HepG2 (cell line): ENCODE measurements at regions of chr15 and their contacts with region 1.

Region 1: GRCh38 chr15:60591496-60592370 is 112.8 kb upstream of the ICE2 start:
- DNase-seq: no peak
- ATAC-seq: peak; percentile 69
- H3K4me3 ChIP-seq: peak overlapping the region; percentile 86 to 98 (median 90)
- H3K27ac ChIP-seq: peak overlapping the region; percentile 90
- H3K4me1 ChIP-seq: peaks cover 55% of the 10 kb centered on the region
- H3K27me3 ChIP-seq: peaks cover 0 to 8% of the 10 kb centered on the region in 2 experiments; a peak in 1 of 5 replicates
- CTCF ChIP-seq: no peak
- EP300 ChIP-seq: no peak
- POLR2A ChIP-seq: no peak; a peak in 2 of 4 replicates
- RAD21 ChIP-seq: no peak; the same call in 1 of the 2 replicates

Region 2: GRCh38 chr15:60568944-60569391 is 22.8 kb before region 1 on chr15:
- CTCF ChIA-PET with region 1: no interaction called
- POLR2A ChIA-PET with region 1: no interaction called
- in situ Hi-C with region 1: no loop called
- intact Hi-C with region 1: no loop called
- DNase-seq: no peak
- ATAC-seq: no peak
- H3K4me3 ChIP-seq: no peak overlapping the region
- H3K27ac ChIP-seq: no peak overlapping the region
- H3K4me1 ChIP-seq: peaks cover 76% of the 10 kb centered on the region
- H3K27me3 ChIP-seq: no peaks in the 10 kb centered on the region
- CTCF ChIP-seq: no peak
- EP300 ChIP-seq: no peak
- POLR2A ChIP-seq: no peak
- RAD21 ChIP-seq: no peak

Region 3: GRCh38 chr15:60580650-60581376 is 10.9 kb before region 1 on chr15:
- CTCF ChIA-PET with region 1: no interaction called
- POLR2A ChIA-PET with region 1: interaction called, 12 read pairs
- in situ Hi-C with region 1: no loop called
- intact Hi-C with region 1: no loop called
- DNase-seq: peak; percentile 72
- ATAC-seq: no peak
- H3K4me3 ChIP-seq: no peak overlapping the region
- H3K27ac ChIP-seq: no peak overlapping the region
- H3K4me1 ChIP-seq: peaks cover 87% of the 10 kb centered on the region
- H3K27me3 ChIP-seq: no peaks in the 10 kb centered on the region
- CTCF ChIP-seq: no peak
- EP300 ChIP-seq: peak in 1 of 2 experiments; percentile 42; a peak in 1 of 4 replicates
- POLR2A ChIP-seq: no peak
- RAD21 ChIP-seq: no peak

Region 4: DNA sequence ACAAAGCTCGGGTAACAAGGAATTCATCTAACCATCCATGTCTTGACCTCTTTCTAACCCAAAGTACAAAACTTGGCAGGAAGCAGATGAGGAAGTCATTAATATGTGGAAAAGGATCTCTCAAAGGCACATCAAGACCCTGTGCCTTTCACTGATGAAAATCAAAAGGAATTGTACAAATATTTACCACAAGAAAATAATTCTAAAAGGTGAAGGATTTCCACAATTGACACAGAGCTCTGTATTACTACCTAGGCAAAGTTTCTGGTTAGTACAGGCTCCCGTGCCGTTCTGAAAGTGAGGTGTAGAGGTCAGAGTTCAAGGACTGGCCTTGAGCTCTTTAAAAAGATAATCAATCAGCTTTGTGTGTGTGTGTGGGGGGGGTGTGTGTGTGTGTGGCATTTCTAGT is 126.9 kb after region 1 on chr15:
- CTCF ChIA-PET with region 1: no interaction called
- POLR2A ChIA-PET with region 1: interaction called, 10 read pairs
- in situ Hi-C with region 1: no loop called
- intact Hi-C with region 1: no loop called
- DNase-seq: peak; percentile 81
- ATAC-seq: peak; percentile 86
- H3K4me3 ChIP-seq: no peak overlapping the region
- H3K27ac ChIP-seq: peak overlapping the region; percentile 41
- H3K4me1 ChIP-seq: peaks cover 66% of the 10 kb centered on the region
- H3K27me3 ChIP-seq: peaks cover 0 to 2% of the 10 kb centered on the region in 2 experiments; a peak in 1 of 5 replicates
- CTCF ChIP-seq: no peak
- EP300 ChIP-seq: peak in 1 of 2 experiments; percentile 89; a peak in 2 of 4 replicates
- POLR2A ChIP-seq: no peak
- RAD21 ChIP-seq: no peak